GM12878 (cell line): ENCODE measurements at regions of chr6 and their contacts with region 1.

Region 1: DNA sequence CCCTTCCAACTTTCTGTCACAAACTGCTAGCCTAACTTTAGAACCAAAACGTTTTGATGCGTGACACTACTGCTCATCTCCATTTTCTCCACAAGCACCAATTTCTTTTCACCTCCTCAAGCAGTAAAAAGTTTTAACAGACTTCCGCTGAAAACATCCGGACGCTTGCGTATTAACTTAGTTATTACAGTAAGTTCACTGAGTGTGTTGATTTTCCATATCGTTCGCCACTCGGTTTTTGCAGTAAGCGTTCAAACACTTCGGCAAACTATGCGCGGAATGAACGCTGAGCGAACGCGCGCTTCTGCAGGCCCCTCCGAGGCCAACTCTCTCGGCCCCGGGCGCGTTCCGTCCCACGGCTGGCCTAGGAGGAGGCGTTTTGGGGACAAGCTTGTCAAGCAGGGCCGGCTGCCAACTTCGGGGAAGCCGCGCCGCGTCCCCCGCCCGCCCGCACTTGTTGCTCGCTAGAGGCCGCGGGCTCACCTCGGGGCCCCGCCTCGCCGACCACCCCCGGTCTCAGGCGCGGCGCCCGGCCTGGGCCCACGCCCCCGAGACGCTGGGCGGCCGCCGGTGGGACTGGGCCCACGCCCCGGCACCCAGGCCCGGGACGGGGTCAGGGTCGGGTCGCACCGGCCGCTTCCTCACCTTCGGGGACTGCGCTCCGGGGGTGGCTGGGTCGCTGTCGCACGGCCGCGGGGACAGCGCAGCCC is 945 bp downstream of the PHF10 start:
- DNase-seq: no peak
- ATAC-seq: peak; percentile 62
- H3K4me3 ChIP-seq: peak overlapping the region; percentile 85
- H3K27ac ChIP-seq: peak overlapping the region; percentile 38
- H3K4me1 ChIP-seq: peaks cover 5% of the 10 kb centered on the region
- H3K27me3 ChIP-seq: no peaks in the 10 kb centered on the region
- CTCF ChIP-seq: no peak
- EP300 ChIP-seq: no peak
- POLR2A ChIP-seq: no peak; the same call in 1 of the 2 replicates
- RAD21 ChIP-seq: no peak

Region 2: GRCh38 chr6:169556758-169557548 is 166.4 kb before region 1 on chr6:
- CTCF ChIA-PET with region 1: no interaction called
- POLR2A ChIA-PET with region 1: no interaction called
- RAD21 ChIA-PET with region 1: no interaction called
- SMC1A ChIA-PET with region 1: no interaction called
- in situ Hi-C with region 1: no loop called
- intact Hi-C with region 1: no loop called
- DNase-seq: peak; percentile 61
- ATAC-seq: peak; percentile 91
- H3K4me3 ChIP-seq: peak overlapping the region; percentile 19; the same call in 1 of the 2 replicates
- H3K27ac ChIP-seq: no peak overlapping the region
- H3K4me1 ChIP-seq: peaks cover 16% of the 10 kb centered on the region
- H3K27me3 ChIP-seq: no peaks in the 10 kb centered on the region
- CTCF ChIP-seq: no peak
- EP300 ChIP-seq: peak; percentile 33 to 74; a peak in 3 of 4 replicates
- POLR2A ChIP-seq: no peak
- RAD21 ChIP-seq: no peak

Region 3: GRCh38 chr6:169669147-169669546 is 54.2 kb before region 1 on chr6:
- CTCF ChIA-PET with region 1: no interaction called
- POLR2A ChIA-PET with region 1: no interaction called
- RAD21 ChIA-PET with region 1: no interaction called
- SMC1A ChIA-PET with region 1: no interaction called
- in situ Hi-C with region 1: no loop called
- intact Hi-C with region 1: no loop called
- DNase-seq: no peak
- ATAC-seq: no peak
- H3K4me3 ChIP-seq: no peak overlapping the region
- H3K27ac ChIP-seq: no peak overlapping the region
- H3K4me1 ChIP-seq: no peaks in the 10 kb centered on the region
- H3K27me3 ChIP-seq: no peaks in the 10 kb centered on the region
- CTCF ChIP-seq: no peak
- EP300 ChIP-seq: no peak
- POLR2A ChIP-seq: no peak
- RAD21 ChIP-seq: no peak

Region 4: GRCh38 chr6:169701954-169702839 is 21.2 kb before region 1 on chr6 and contains the starts of genes C6orf120 and WDR27:
- CTCF ChIA-PET with region 1: interaction called, 6 read pairs
- POLR2A ChIA-PET with region 1: interaction called, 32 read pairs
- RAD21 ChIA-PET with region 1: interaction called, 9 read pairs
- SMC1A ChIA-PET with region 1: interaction called, 39 read pairs
- in situ Hi-C with region 1: no loop called
- intact Hi-C with region 1: loop called (anchors 1 kb)
- DNase-seq: peak; percentile 83
- ATAC-seq: peak; percentile 96
- H3K4me3 ChIP-seq: peak within 1 kb of the TSS; percentile 99
- H3K27ac ChIP-seq: peak within 1 kb of the TSS; percentile 78
- H3K4me1 ChIP-seq: peaks cover 7% of the 10 kb centered on the region
- H3K27me3 ChIP-seq: no peaks in the 10 kb centered on the region
- CTCF ChIP-seq: peak in 2 of 3 experiments; percentile 14 to 18; a peak in 1 of 6 replicates
- EP300 ChIP-seq: no peak
- POLR2A ChIP-seq: peak; percentile 98
- RAD21 ChIP-seq: no peak; the same call in 1 of the 2 replicates
- polyA plus RNA-seq, gene C6orf120: 3.6 to 6.2 TPM
- polyA plus RNA-seq, gene WDR27: 1.9 to 3.8 TPM

Region 5: GRCh38 chr6:169709293-169709692 is 14.1 kb before region 1 on chr6:
- CTCF ChIA-PET with region 1: interaction called, 13 read pairs
- POLR2A ChIA-PET with region 1: interaction called, 32 read pairs
- RAD21 ChIA-PET with region 1: interaction called, 3 read pairs
- SMC1A ChIA-PET with region 1: interaction called, 39 read pairs
- in situ Hi-C with region 1: no loop called
- intact Hi-C with region 1: no loop called
- DNase-seq: no peak
- ATAC-seq: peak; percentile 41
- H3K4me3 ChIP-seq: no peak overlapping the region
- H3K27ac ChIP-seq: no peak overlapping the region
- H3K4me1 ChIP-seq: peaks cover 6% of the 10 kb centered on the region; the same call in 1 of the 2 replicates
- H3K27me3 ChIP-seq: no peaks in the 10 kb centered on the region
- CTCF ChIP-seq: no peak
- EP300 ChIP-seq: no peak
- POLR2A ChIP-seq: no peak
- RAD21 ChIP-seq: no peak

Region 6: DNA sequence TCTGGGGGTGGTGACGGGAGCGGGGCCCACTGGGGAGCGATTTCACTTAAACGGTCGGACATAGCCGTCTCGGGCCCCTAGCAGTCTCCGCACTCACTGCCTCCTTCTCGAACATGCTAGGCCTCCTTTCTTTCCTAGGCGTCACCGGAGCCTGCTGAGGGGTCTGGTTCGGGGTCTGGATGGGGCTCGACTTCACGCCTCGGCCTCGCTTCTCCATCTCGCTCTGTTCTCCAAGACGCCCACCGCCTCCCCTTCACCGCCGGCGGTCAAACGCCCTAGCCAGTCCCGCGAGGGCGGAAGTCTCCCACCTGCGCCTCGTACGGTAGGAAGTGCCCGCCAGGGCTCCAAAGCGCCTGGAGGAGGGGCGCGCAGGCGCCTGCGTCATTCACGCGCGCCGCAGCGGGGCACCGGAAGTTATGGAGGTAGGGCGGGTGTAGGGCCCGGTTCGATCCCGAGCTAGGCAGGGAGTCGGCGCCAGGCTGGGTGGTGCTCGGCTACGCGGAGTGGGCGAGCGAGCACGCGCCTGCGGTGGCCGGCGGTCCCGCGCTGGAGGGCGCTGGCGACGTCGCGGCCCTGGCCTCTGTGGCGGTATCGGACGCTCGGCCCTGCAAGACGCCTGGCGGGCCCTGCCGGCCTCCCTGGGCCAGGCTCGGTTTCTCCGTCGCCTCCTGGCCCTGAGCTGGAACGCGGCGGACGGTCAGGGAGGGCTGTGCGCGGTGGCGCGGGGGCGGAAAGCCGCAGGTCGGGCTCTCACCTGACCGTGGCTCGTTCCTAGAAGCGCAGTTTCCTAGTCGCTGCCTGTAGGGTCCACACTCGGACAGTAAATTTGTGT is 28.1 kb after region 1 on chr6 and contains the starts of genes DYNLT2 and ERMARD:
- CTCF ChIA-PET with region 1: interaction called, 3 read pairs
- POLR2A ChIA-PET with region 1: interaction called, 4 read pairs
- RAD21 ChIA-PET with region 1: no interaction called
- SMC1A ChIA-PET with region 1: interaction called, 8 read pairs
- in situ Hi-C with region 1: no loop called
- intact Hi-C with region 1: loop called (anchors 1 kb)
- DNase-seq: peak; percentile 69
- ATAC-seq: peak; percentile 96
- H3K4me3 ChIP-seq: peak within 1 kb of the TSS; percentile 97
- H3K27ac ChIP-seq: peak within 1 kb of the TSS; percentile 91
- H3K4me1 ChIP-seq: peaks cover 5% of the 10 kb centered on the region; the same call in 1 of the 2 replicates
- H3K27me3 ChIP-seq: no peaks in the 10 kb centered on the region
- CTCF ChIP-seq: no peak
- EP300 ChIP-seq: peak in 1 of 2 experiments; percentile 27; a peak in 1 of 4 replicates
- POLR2A ChIP-seq: peak; percentile 99
- RAD21 ChIP-seq: no peak
- polyA plus RNA-seq, gene DYNLT2: 2.2 to 3.0 TPM
- polyA plus RNA-seq, gene ERMARD: 43.7 to 63.3 TPM

Region 7: GRCh38 chr6:170306324-170307079 is 583.1 kb after region 1 on chr6 and contains the start of gene FAM120B:
- CTCF ChIA-PET with region 1: no interaction called
- POLR2A ChIA-PET with region 1: no interaction called
- RAD21 ChIA-PET with region 1: no interaction called
- SMC1A ChIA-PET with region 1: no interaction called
- in situ Hi-C with region 1: no loop called
- intact Hi-C with region 1: loop called (anchors 10 kb)
- DNase-seq: peak; percentile 72
- ATAC-seq: peak; percentile 96
- H3K4me3 ChIP-seq: peak within 1 kb of the TSS; percentile 94
- H3K27ac ChIP-seq: peak within 1 kb of the TSS; percentile 84
- H3K4me1 ChIP-seq: peaks cover 5% of the 10 kb centered on the region; the same call in 1 of the 2 replicates
- H3K27me3 ChIP-seq: no peaks in the 10 kb centered on the region
- CTCF ChIP-seq: no peak
- EP300 ChIP-seq: no peak
- POLR2A ChIP-seq: peak; percentile 99
- RAD21 ChIP-seq: no peak
- polyA plus RNA-seq, gene FAM120B: 3.3 to 4.8 TPM